BJ (cell line): ENCODE measurements at regions of chr20 and their contacts with region 1.

Region 1: GRCh38 chr20:45890985-45891983 is at the starts of genes CTSA and NEURL2:
- DNase-seq: no peak
- H3K4me3 ChIP-seq: peak within 1 kb of the TSS; percentile 77
- H3K27me3 ChIP-seq: no peaks in the 10 kb centered on the region
- CTCF ChIP-seq: 0 out of 2 replicates have a peak, but pooled peaks have one; percentile 1
- polyA plus RNA-seq, gene CTSA: 286 and 408 TPM in 2 replicates
- polyA plus RNA-seq, gene NEURL2: 2.1 and 4.3 TPM in 2 replicates

Region 2: DNA sequence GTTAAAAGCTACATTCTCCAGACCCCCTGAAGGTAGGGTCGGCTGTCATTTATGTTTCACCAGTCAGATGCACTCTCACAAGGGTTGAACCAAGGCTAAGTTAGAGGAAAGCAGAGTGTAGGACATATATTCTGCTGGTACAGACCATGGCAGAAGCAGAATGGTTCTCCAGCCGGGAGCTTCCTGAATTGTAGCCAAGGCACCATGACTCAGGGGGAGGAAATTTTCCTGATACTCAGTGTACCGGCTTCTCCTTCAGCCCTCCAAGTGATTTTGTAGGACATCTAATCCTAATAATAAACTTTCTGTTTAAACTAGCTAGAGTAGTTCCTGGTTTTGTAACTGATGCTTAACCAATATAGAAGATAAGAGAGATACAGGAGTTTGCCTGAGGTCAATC is 622.8 kb before region 1 on chr20:
- CTCF ChIA-PET with region 1: no interaction called
- POLR2A ChIA-PET with region 1: no interaction called
- DNase-seq: no peak
- H3K4me3 ChIP-seq: no peak overlapping the region
- H3K27me3 ChIP-seq: peaks cover 3% of the 10 kb centered on the region
- CTCF ChIP-seq: no peak

Region 3: DNA sequence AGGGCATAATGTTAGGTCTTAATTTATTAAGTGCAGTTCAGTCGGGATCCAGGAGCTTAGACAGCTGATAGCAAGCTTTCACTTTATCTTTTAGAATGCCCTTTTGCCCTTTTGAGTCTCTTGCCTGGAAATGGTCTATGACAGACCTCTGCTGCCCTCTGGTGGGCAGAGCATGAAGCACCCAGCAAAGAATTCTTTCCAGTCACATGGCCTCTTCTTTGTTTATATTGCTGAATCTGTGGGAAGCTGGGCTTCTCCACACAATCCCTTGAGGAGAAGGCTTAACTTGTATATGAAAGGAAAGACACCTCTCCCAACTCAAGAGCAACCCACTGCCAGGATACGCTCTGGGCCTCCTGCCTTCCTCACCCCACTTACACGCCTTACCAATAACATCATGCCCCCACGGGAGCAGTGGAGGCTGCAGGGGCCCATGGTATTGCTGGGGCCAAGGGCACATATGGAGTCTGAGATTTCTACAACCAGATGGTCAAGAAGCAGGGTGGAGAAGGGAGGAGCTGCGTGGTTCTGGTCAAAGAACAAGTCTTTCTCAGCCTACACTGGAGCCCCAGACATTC is 120.0 kb before region 1 on chr20:
- CTCF ChIA-PET with region 1: no interaction called
- POLR2A ChIA-PET with region 1: no interaction called
- DNase-seq: no peak
- H3K4me3 ChIP-seq: no peak overlapping the region
- H3K27me3 ChIP-seq: peaks cover 18% of the 10 kb centered on the region
- CTCF ChIP-seq: peak; percentile 90

Region 4: DNA sequence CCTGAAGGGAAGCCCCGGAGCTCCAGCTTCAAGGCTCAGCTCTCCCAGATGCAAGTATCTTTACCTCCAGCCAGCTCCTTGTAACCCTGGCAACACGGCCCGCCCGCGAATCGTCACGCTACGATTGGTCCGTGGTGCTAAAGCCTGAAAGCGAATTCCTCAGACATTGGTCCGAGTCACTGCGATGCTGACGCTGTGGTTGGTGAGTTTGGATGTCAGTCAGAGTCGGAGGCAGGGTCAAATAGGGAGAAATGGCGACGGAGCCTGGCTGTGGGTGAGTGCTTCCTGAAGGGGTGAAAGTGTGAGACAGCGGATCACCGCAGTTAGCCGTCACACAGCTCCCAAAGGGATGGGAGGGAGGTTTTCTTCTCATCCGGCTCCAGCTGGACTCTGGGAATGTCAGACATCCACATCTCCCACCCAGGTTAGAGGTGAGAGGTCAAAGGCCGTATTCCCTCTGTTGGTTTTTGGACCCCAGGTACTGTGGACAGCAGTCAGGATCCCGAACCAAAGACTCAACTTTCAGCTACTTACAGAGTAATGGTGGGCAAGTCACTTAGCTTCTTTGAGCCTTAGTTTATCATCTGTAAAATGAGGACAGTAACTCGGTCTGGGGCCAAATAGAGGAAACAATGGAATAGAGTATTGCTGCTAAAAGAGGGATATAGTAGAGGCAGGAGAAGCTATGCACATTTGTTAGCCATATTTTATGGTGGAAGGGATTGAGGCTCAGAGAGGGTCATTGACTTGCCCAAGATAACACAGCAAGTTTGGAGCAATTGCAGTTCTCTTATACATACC is 10.1 kb before region 1 on chr20 and contains the start of gene ZSWIM1:
- CTCF ChIA-PET with region 1: interaction called, 13 read pairs
- POLR2A ChIA-PET with region 1: interaction called, 9 read pairs
- DNase-seq: peak; percentile 97
- H3K4me3 ChIP-seq: peak within 1 kb of the TSS; percentile 68
- H3K27me3 ChIP-seq: no peaks in the 10 kb centered on the region
- CTCF ChIP-seq: no peak
- polyA plus RNA-seq, gene ZSWIM1: 4.9 and 6.0 TPM in 2 replicates

Region 5: DNA sequence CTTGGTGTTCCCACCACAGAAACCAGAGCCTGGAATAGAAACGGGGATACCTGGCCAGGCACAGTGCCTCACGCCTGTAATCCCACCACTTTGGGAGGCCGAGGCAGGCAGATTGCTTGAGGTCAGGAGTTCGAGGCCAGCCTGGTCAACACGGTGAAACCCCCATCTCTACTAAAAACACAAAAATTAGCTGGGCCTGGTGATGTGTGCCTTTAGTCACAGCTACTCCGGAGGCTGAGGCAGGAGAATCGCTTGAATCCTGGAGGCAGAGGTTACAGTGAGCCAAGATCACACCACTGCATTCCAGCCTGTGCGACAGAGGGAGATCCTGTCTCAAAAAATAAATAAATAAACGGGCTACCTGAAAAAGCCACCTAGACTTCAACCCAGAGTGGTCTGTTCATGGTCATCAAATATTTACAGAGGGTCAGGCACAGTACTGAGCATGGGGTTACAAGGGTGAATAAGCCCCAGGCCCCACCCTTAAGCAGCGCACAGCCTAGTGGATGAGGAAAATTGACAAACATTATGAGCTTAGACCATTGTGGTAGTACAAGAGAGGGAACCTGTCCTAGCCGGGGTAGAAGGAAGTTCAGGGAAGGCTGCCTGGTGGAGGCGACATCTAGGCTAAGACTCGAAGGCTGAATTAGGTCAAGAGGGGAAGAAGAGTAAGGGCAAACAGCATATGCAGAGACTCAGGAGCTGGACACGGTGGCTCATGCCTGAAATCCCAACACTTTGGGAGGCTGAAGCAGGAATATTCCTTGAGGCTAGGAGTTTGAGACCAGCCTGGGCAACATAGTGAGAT is 36.0 kb after region 1 on chr20:
- CTCF ChIA-PET with region 1: interaction called, 12 read pairs
- POLR2A ChIA-PET with region 1: no interaction called
- DNase-seq: no peak
- H3K4me3 ChIP-seq: no peak overlapping the region
- H3K27me3 ChIP-seq: no peaks in the 10 kb centered on the region
- CTCF ChIP-seq: no peak